Stomach (tissue), 19 donors: ENCODE measurements at regions of chr19 and their contacts with region 1.

Region 1: DNA sequence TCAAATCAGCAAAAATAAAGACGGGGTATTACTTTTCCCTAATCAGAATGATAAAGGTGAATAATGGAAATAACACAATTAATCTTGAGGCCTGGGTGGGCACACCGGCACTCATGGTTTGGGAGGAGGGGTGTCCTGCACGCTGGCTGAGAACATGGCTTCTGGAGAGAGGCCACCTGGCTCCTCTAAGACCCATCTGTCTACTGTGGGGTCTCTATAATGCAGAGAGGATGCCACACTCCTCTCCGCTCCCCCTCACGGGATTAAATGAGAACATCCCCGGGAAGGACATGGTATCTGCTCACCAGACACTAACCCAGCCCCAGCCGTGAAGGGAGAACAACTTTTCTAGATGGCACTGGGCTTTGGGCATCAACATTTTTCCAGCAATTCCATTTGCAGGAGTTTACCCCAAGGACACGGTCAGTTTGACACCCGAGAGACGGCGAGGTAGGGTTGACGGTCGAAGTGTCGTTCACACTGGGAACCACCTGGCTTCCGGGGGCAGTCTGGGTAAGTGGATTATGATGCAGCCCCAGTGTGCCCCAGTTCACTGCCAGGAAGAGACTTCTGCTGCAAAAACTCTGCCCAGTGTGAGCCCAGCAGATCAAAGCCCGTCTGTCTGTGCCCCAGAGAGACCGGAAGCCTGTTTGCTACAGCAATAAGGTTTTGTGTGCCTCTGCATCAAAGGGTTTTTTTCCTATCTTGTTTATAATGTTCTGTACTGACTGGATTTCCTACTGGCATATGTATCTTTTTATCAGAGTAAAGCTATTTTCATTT is 56.6 kb downstream of the CEBPG start:
- DNase-seq: no peak
- H3K4me3 ChIP-seq: no peak overlapping the region
- H3K27ac ChIP-seq: no peak overlapping the region
- H3K4me1 ChIP-seq: peaks cover 0 to 4% (median 0%) of the 10 kb centered on the region in 4 donors
- H3K27me3 ChIP-seq: no peaks in the 10 kb centered on the region
- CTCF ChIP-seq: no peak
- EP300 ChIP-seq: no peak
- POLR2A ChIP-seq: no peak

Region 2: DNA sequence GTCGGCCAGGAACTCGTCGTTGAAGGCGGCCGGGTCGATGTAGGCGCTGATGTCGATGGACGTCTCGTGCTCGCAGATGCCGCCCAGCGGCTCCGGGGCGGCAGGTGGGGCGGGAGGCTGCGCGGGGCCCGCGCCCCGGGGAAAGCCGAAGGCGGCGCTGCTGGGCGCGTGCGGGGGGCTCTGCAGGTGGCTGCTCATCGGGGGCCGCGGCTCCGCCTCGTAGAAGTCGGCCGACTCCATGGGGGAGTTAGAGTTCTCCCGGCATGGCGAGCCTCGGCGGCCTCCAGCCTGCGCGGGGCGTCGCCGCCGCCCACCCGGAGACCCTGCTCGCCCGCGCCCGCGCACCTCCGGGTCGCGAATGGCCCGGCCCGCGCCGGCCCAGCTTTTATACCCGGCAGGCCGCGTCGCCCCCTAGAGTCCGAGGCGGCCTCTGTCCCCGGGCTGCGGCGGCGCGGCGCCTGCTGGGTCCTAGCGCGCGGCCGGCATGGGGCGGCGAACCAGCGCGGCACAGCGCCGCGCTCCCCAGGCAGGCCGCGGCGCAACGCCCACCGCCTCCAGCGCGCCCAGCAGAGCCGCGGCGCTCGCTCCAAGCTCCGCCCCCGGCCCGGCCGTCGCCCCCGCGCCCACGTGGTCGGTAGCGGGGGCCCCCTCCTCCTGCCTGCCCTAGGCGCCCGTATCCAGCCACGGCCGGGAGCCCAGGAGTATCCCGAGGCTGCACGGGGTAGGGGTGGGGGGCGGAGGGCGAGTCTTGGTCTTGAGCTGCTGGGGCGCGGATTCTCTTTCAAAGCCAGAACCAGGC is 127.7 kb before region 1 on chr19 and contains the start of gene CEBPA:
- intact Hi-C with region 1: no loop called
- DNase-seq: peak; percentile 90 to 96
- H3K4me3 ChIP-seq: peak within 1 kb of the TSS; percentile 73 to 98 (median 86)
- H3K27ac ChIP-seq: peak within 1 kb of the TSS; percentile 86 to 95 (median 91)
- H3K4me1 ChIP-seq: peaks cover 49 to 90% (median 79%) of the 10 kb centered on the region in 4 donors
- H3K27me3 ChIP-seq: peaks cover 0 to 31% (median 0%) of the 10 kb centered on the region in 3 donors
- CTCF ChIP-seq: peak in 3 of 7 experiments; percentile 30 to 79 (median 51)
- EP300 ChIP-seq: no peak
- POLR2A ChIP-seq: no peak
- total RNA-seq, gene CEBPA: 9.9 to 167 (median 18.7) TPM

Region 3: DNA sequence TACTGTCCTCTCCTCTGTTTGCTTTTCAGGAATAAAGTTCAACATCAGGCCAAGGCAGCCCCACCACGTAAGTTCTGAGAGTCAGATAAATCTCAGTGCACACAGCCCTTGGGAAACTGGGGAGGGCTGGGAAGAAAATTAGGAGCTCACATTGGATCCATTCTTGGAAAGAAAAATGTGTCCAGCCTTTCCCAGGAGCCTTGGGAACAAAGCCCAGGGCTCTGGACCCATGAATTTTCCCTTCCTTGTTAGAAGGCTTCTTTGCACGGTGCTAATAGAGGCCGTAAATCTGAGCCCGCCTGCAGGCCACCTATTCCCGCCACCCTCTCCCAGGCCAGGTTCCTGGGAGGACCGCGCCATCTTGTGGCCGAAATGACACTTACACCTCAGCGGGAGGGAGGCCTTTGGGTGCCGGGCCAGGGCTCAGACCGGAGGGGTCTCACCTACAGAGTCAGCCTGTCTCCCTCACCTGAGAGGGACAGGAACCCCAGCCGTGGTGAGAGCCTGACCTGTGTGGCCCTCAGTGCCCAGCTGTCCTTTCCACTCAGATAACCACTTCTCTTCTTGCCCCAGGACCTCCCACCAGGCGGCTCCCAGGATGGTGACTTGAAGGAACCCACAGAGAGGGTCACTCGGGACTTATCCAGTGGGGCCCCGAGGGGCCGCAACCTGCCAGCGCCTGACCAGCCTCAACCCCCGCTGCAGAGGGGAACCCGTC is 341.5 kb after region 1 on chr19:
- intact Hi-C with region 1: loop called (anchors 5 kb)
- DNase-seq: peak; percentile 76 to 89
- H3K4me3 ChIP-seq: no peak overlapping the region
- H3K27ac ChIP-seq: no peak overlapping the region
- H3K4me1 ChIP-seq: peaks cover 0 to 7% (median 3%) of the 10 kb centered on the region in 4 donors
- H3K27me3 ChIP-seq: peaks cover 0 to 61% (median 8%) of the 10 kb centered on the region in 3 donors
- CTCF ChIP-seq: peak in 5 of 7 experiments; percentile 61 to 83 (median 81)
- EP300 ChIP-seq: no peak
- POLR2A ChIP-seq: no peak